CD4-positive, alpha-beta T cell (primary cell): ENCODE measurements at regions of chr12 and their contacts with region 1.

Region 1: DNA sequence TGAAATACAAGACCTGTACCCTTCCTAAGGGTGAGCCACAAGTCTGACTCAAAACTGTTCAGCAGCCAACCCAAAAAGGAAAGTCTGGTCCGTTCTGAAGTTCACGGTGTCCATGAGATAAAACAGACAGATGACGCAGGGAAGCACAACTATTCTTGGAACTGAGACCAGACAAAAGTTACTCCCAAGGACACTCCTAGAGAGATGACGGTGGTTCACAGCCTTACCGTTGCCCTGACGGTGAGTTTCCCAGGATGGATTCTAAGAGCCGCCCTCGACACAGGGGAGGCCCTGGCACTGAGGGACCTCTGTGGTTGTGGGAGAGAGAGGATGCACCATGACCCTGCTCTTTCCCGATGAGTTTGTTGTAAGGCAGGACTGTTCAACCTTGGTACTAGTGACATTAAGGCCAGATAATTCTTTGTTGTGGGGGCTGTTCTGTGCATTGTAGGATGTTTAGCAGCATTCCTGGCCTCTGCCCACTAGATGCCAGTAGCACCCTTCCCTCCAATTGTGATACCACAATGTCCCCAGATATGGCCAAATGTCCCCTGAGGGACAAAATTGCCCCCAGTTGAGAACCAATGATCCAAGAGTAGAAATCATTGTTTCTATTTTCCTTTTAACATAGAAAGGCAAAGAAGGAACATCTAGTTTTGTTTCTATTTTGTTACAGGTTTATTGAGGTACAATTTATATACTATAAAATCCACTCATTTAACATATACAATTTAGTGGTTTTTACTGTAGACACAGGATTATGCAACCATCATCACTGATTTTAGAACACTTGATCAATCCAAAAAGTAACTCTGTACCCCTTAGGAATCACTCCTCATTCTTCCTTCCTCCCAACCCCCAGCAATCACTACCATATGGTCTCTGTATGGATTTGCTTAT is 23.0 kb downstream of the OR10P1 start:
- DNase-seq: peak in 1 of 14 experiments; percentile 20
- ATAC-seq: no peak
- H3K4me3 ChIP-seq: no peak overlapping the region
- H3K4me3 Mint-ChIP-seq: no peak overlapping the region
- H3K27ac ChIP-seq: no peak overlapping the region
- H3K27ac Mint-ChIP-seq: no peak overlapping the region
- H3K4me1 ChIP-seq: peaks cover 4% of the 10 kb centered on the region
- H3K4me1 Mint-ChIP-seq: no peaks in the 10 kb centered on the region
- H3K27me3 ChIP-seq: peaks cover 0 to 2% of the 10 kb centered on the region in 2 experiments
- H3K27me3 Mint-ChIP-seq: peaks cover 5% of the 10 kb centered on the region
- CTCF ChIP-seq: no peak

Region 2: DNA sequence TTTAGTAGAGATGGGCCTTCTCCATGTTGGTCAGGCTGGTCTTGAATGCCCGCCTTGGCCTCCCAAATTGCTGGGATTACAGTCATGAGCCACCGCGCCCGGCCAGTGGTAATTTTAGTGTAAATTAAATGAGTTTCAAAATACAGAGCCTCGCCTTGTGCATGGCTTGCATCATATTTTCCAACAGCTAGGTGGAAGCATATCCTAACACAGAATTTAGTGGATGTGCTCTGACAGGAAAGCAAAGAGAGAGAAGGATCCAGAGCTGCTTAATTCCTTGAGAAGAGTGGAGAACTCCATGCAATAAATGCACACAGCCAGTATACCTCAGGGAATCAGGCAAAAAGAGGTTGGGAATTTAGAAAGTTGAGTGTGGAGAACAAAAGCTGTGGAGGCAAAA is 213.4 kb before region 1 on chr12:
- CTCF ChIA-PET with region 1: no interaction called
- POLR2A ChIA-PET with region 1: no interaction called
- intact Hi-C with region 1: no loop called
- DNase-seq: no peak
- ATAC-seq: no peak
- H3K4me3 ChIP-seq: no peak overlapping the region
- H3K4me3 Mint-ChIP-seq: no peak overlapping the region
- H3K27ac ChIP-seq: no peak overlapping the region
- H3K27ac Mint-ChIP-seq: no peak overlapping the region
- H3K4me1 ChIP-seq: no peaks in the 10 kb centered on the region
- H3K4me1 Mint-ChIP-seq: no peaks in the 10 kb centered on the region
- H3K27me3 ChIP-seq: peaks cover 0 to 12% of the 10 kb centered on the region in 2 experiments
- H3K27me3 Mint-ChIP-seq: peaks cover 24% of the 10 kb centered on the region
- CTCF ChIP-seq: no peak

Region 3: GRCh38 chr12:55642669-55643068 is 17.1 kb before region 1 on chr12:
- CTCF ChIA-PET with region 1: interaction called, 51 read pairs
- POLR2A ChIA-PET with region 1: interaction called, 13 read pairs
- intact Hi-C with region 1: loop called (anchors 1 to 2 kb)
- DNase-seq: peak in 5 of 14 experiments; percentile 12 to 51 (median 42)
- ATAC-seq: no peak
- H3K4me3 ChIP-seq: no peak overlapping the region
- H3K4me3 Mint-ChIP-seq: no peak overlapping the region
- H3K27ac ChIP-seq: no peak overlapping the region
- H3K27ac Mint-ChIP-seq: no peak overlapping the region
- H3K4me1 ChIP-seq: peaks cover 37% of the 10 kb centered on the region
- H3K4me1 Mint-ChIP-seq: peaks cover 23% of the 10 kb centered on the region
- H3K27me3 ChIP-seq: no peaks in the 10 kb centered on the region
- H3K27me3 Mint-ChIP-seq: peaks cover 4% of the 10 kb centered on the region
- CTCF ChIP-seq: no peak